ENCODE measurements at regions of chr15 and their contacts with region 1.

Region 1: DNA sequence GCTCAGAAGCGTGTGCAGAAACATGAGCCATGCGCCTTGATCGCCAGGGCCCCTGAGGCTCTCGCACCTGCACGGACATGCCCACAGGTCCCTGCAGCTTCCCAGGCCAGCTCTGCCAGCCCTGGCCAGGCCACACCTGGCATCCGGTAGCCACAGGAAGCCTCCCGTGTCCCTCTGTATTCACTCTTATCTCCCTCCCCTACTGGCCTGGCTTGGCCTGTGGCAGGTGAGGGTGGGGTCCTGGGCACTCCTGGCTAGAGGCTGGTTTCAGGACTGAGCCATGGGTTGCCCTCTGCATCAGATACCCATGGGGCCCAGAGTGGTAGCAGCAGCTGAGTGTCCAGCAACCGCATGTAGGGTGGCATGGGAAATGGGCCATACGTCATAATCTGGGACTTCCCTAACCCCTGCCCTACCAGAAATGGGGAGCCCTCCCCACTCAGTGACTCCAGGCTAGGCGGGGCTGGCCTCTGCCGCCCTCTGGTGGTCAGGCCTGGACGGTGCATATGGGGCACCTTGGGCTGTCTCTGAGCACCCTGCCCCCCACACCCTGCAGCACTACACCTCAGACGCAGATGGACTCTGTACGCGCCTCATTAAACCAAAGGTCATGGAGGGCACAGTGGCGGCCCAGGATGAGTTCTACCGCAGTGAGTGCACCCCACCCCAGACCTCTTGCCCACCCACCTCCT is 12.6 kb upstream of the LMAN1L start:
- DNase-seq: peak; percentile 95 to 98 (median 96)
- H3K4me3 ChIP-seq: no peak overlapping the region
- H3K4me3 Mint-ChIP-seq: no peak overlapping the region
- H3K27ac ChIP-seq: peak overlapping the region; percentile 64 to 93
- H3K27ac Mint-ChIP-seq: peak overlapping the region; percentile 93 to 98 (median 96)
- H3K4me1 ChIP-seq: peaks cover 36 to 49% of the 10 kb centered on the region in 2 donors
- H3K4me1 Mint-ChIP-seq: peaks cover 44% of the 10 kb centered on the region
- H3K27me3 ChIP-seq: no peaks in the 10 kb centered on the region
- H3K27me3 Mint-ChIP-seq: peaks cover 0 to 1% (median 1%) of the 10 kb centered on the region in 3 donors
- CTCF ChIP-seq: peak; percentile 98

Region 2: DNA sequence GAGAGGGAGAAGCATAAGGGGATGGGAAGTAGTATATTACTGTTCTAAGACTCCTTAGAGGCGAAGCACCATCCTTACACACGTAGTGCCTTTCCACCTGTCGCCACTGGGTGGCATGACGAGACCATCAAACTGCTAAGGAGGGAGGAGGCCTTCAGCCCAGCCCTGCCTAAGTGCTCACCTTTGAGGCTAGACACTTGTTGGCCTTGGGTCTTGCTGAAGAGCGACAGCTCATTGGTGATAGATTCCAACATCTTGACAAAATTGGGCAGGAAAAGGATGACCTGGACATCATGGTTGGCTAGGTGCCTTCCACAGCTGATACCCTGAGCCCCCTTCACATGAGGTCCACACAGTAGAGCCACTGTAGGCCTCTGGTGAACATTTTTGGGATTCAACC is 164.8 kb before region 1 on chr15:
- intact Hi-C with region 1: loop called (anchors 10 kb)
- DNase-seq: peak; percentile 59 to 71 (median 69)
- H3K4me3 ChIP-seq: no peak overlapping the region
- H3K4me3 Mint-ChIP-seq: no peak overlapping the region
- H3K27ac ChIP-seq: no peak overlapping the region
- H3K27ac Mint-ChIP-seq: no peak overlapping the region
- H3K4me1 ChIP-seq: no peaks in the 10 kb centered on the region
- H3K4me1 Mint-ChIP-seq: no peaks in the 10 kb centered on the region
- H3K27me3 ChIP-seq: no peaks in the 10 kb centered on the region
- H3K27me3 Mint-ChIP-seq: peaks cover 0 to 2% (median 0%) of the 10 kb centered on the region in 3 donors
- CTCF ChIP-seq: peak; percentile 97

Region 3: DNA sequence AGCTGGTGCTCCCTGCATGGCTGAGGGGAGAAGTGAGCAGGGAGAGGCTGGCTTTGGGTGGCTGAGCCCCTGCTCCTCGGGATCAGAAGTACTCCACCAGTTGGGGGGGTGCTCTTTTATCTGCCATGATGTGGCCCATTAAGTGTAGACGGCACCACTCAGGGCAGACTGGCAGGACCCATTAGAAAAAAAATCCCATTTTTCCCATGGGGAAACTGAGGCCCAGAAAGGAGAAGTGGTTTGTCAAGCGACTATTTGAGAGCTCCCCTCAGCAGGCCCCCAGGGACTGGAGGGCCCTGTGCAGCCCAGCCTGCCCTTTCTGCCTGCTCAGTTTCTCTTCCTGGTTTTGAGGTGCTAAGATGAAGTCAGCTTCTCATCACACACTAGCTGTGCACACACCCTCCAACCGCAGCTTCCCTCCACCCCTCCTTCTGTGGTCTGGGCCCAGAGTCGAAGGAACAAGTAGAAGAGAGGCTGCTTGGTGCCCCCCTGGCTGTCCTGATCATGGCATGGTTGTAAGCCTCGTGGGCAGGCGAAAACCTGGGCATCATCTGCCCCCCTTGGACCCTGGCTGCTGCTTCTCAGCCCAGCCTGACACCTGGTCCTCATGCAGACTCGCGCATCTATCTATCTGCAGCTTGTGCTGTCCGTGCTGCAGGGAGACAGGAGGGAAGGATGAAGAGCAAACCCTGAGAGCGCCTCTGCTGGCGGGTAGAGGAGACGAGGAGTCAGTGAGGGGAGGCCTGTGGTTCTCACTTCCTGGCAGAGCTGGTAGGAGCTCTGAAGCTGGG is 12.6 kb before region 1 on chr15:
- intact Hi-C with region 1: loop called (anchors 1 to 2 kb)
- DNase-seq: peak; percentile 92 to 96 (median 95)
- H3K4me3 ChIP-seq: peak overlapping the region in 2 of 3 experiments; percentile 46 to 100
- H3K4me3 Mint-ChIP-seq: peak overlapping the region; percentile 94 to 95
- H3K27ac ChIP-seq: peak overlapping the region; percentile 96 to 97
- H3K27ac Mint-ChIP-seq: peak overlapping the region; percentile 99 to 100 (median 100)
- H3K4me1 ChIP-seq: peaks cover 91 to 95% of the 10 kb centered on the region in 2 donors
- H3K4me1 Mint-ChIP-seq: peaks cover 86% of the 10 kb centered on the region
- H3K27me3 ChIP-seq: no peaks in the 10 kb centered on the region
- H3K27me3 Mint-ChIP-seq: peaks cover 0 to 2% (median 0%) of the 10 kb centered on the region in 3 donors
- CTCF ChIP-seq: peak; percentile 82